ENCODE measurements at regions of chr19 and their contacts with region 1.

Region 1: DNA sequence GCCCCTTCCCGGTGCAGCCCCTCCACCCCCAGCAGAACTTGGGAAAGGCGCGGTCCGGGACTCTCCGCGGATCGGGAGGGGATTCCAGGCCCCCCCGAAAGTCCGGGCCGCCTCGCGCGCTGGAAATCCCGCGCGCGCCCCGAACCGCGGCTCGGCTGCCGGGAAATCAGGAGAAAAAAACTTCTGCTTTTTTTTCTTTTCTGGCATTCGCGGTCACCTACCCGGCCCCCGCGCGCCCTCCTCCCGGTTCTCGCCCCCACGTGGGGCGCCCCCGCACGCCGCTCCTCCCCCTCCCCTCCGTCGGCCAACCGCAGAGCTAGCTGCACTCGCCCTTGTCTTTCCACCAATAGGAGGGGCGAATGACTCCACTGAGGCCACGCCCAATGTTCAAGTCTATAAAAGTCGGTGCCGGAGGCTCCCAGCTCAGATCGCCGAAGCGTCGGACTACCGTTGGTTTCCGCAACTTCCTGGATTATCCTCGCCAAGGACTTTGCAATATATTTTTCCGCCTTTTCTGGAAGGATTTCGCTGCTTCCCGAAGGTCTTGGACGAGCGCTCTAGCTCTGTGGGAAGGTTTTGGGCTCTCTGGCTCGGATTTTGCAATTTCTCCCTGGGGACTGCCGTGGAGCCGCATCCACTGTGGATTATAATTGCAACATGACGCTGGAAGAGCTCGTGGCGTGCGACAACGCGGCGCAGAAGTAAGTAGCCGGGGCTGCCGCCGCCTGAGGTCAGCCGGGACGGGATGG is at the start of gene GADD45B:
- DNase-seq: peak; percentile 91 to 98 (median 97)
- ATAC-seq: peak; percentile 87
- H3K4me3 ChIP-seq: peak within 1 kb of the TSS; percentile 91
- H3K4me3 Mint-ChIP-seq: peak within 1 kb of the TSS; percentile 97 to 100 (median 99)
- H3K27ac ChIP-seq: peak within 1 kb of the TSS; percentile 90
- H3K27ac Mint-ChIP-seq: peak within 1 kb of the TSS; percentile 92 to 99 (median 96)
- H3K4me1 ChIP-seq: peaks cover 0 to 14% of the 10 kb centered on the region in 2 donors
- H3K4me1 Mint-ChIP-seq: peaks cover 7 to 20% (median 16%) of the 10 kb centered on the region in 7 donors
- H3K27me3 ChIP-seq: no peaks in the 10 kb centered on the region
- H3K27me3 Mint-ChIP-seq: peaks cover 0 to 10% (median 0%) of the 10 kb centered on the region in 5 donors
- total RNA-seq, gene GADD45B: 71.7 to 157 (median 84.2) TPM

Region 2: GRCh38 chr19:2164020-2164998 is 311.6 kb before region 1 on chr19:
- CTCF ChIA-PET with region 1: no interaction called
- POLR2A ChIA-PET with region 1: no interaction called
- intact Hi-C with region 1: loop called in 1 of 2 experiments (anchors 5 kb)
- DNase-seq: peak in 2 of 9 donors; percentile 33 to 57
- ATAC-seq: peak; percentile 30
- H3K4me3 ChIP-seq: peak overlapping the region; percentile 69
- H3K4me3 Mint-ChIP-seq: peak overlapping the region; percentile 86 to 96 (median 91)
- H3K27ac ChIP-seq: peak overlapping the region; percentile 95
- H3K27ac Mint-ChIP-seq: peak overlapping the region in 8 of 9 donors; percentile 46 to 91 (median 87)
- H3K4me1 ChIP-seq: peaks cover 0 to 22% of the 10 kb centered on the region in 2 donors
- H3K4me1 Mint-ChIP-seq: peaks cover 8 to 39% (median 29%) of the 10 kb centered on the region in 7 donors
- H3K27me3 ChIP-seq: no peaks in the 10 kb centered on the region
- H3K27me3 Mint-ChIP-seq: no peaks in the 10 kb centered on the region

Region 3: DNA sequence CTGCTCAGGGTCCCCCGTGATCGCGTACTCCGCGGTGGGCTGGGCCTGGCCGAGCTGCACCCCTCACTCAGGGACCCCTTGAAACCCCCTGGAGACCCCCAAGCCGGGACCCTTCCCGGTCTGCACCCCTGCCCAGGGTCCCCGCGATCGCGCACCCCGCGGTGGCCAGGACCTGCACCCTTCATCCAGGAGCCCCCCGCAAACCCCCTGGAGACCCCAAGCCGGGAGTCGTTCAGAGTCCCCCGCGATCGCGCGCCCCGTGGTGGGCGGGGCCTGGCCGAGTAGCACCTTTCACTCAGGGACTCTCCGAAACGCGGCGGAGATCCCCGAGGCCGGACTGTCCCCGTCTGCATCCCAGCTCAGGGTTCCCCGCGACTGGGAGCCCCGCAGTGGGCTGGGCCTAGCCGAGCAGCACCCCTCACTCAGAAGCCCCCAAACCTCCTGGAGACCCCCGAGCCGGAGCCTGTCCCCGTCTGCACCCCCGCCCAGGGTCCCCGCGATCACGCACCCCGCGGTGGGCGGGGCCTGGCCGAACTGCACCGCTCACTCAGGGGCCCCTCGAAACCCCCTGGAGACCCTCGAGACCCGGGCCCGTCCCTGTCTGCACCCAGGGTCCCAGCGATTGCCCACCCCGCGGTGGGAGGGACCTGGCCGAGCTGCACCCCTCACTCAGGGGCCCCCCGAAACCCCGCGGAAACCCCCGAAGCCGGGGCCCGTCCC is 19.9 kb before region 1 on chr19:
- CTCF ChIA-PET with region 1: interaction called, 5 read pairs
- POLR2A ChIA-PET with region 1: interaction called, 25 read pairs
- intact Hi-C with region 1: loop called (anchors 1 to 2 kb)
- DNase-seq: peak in 5 of 9 donors; percentile 14 to 68 (median 29)
- ATAC-seq: peak; percentile 59
- H3K4me3 ChIP-seq: peak overlapping the region; percentile 79
- H3K4me3 Mint-ChIP-seq: peak overlapping the region; percentile 77 to 90 (median 84)
- H3K27ac ChIP-seq: peak overlapping the region; percentile 86
- H3K27ac Mint-ChIP-seq: peak overlapping the region in 6 of 9 donors; percentile 77 to 88 (median 82)
- H3K4me1 ChIP-seq: peaks cover 14 to 18% of the 10 kb centered on the region in 2 donors
- H3K4me1 Mint-ChIP-seq: peaks cover 14 to 28% (median 18%) of the 10 kb centered on the region in 7 donors
- H3K27me3 ChIP-seq: no peaks in the 10 kb centered on the region
- H3K27me3 Mint-ChIP-seq: no peaks in the 10 kb centered on the region

Region 4: DNA sequence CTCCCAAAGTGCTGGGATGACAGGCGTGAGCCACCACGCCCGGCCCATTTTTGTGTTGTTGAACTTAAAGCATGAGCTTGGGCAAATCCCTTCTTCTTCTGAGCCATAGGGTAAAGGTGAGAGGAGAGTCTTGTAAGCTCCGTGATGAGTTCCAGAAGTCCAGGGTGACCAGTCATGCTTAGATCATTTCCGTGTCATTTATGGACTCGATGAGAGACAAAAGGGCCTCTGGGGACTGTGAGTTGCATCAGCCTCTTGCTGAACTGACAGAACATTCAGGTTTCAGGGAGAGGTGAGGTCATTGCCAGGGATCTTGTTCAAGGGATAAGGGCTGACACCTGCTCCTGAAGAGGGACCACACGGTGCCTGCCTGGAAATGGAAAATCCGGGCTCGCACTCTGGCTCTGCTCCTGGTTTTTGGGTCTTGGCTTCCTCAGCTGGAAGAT is 53.6 kb after region 1 on chr19:
- CTCF ChIA-PET with region 1: interaction called, 3 read pairs
- POLR2A ChIA-PET with region 1: interaction called, 35 read pairs
- intact Hi-C with region 1: no loop called
- DNase-seq: no peak
- ATAC-seq: no peak
- H3K4me3 ChIP-seq: no peak overlapping the region
- H3K4me3 Mint-ChIP-seq: no peak overlapping the region
- H3K27ac ChIP-seq: no peak overlapping the region
- H3K27ac Mint-ChIP-seq: no peak overlapping the region
- H3K4me1 ChIP-seq: peaks cover 3 to 7% of the 10 kb centered on the region in 2 donors
- H3K4me1 Mint-ChIP-seq: peaks cover 13 to 22% (median 14%) of the 10 kb centered on the region in 7 donors
- H3K27me3 ChIP-seq: no peaks in the 10 kb centered on the region
- H3K27me3 Mint-ChIP-seq: no peaks in the 10 kb centered on the region

Region 5: DNA sequence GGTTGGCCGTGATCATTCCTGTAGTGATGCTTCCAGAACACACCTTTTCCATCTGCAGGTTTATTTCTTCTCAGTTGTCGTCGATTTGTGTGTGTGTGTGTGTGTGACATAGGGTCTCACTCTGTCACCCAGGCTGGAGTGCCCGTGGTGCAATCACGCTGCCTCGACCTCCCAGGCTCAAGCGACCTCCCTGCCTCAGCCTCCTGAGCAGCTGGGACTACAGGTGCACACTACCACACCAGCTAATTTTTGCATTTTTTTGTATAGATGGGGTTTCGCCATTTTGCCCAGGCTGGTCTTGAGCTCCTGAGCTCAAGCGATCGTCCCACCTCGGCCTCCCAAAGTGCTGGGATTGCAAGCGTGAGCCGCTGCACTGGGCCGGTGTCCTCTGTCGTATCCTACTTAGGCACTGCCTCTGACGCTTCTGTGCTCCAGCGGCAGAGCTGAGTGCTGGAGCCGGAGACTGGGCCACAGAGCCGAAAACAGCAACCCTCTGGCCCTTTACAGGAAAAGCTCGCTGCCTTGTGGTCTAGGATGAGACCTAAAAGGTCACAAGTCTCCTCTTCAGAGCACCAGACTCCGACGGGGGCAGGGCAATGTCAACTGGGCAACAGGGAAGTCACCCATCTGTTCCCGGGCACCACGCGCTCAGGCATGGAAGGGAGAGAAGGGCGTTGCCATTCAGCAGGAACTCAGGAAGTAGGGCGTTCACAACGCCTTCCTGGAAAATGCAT is 91.5 kb after region 1 on chr19:
- CTCF ChIA-PET with region 1: interaction called, 4 read pairs
- POLR2A ChIA-PET with region 1: interaction called, 74 read pairs
- intact Hi-C with region 1: loop called in 1 of 2 experiments (anchors 1 kb)
- DNase-seq: no peak
- ATAC-seq: peak; percentile 31
- H3K4me3 ChIP-seq: no peak overlapping the region
- H3K4me3 Mint-ChIP-seq: peak overlapping the region in 3 of 10 donors; percentile 25 to 58 (median 34)
- H3K27ac ChIP-seq: no peak overlapping the region
- H3K27ac Mint-ChIP-seq: peak overlapping the region in 3 of 9 donors; percentile 0 to 60 (median 21)
- H3K4me1 ChIP-seq: peaks cover 0 to 2% of the 10 kb centered on the region in 2 donors
- H3K4me1 Mint-ChIP-seq: peaks cover 4 to 34% (median 17%) of the 10 kb centered on the region in 7 donors
- H3K27me3 ChIP-seq: no peaks in the 10 kb centered on the region
- H3K27me3 Mint-ChIP-seq: no peaks in the 10 kb centered on the region

Region 6: GRCh38 chr19:2627319-2627829 is 151.5 kb after region 1 on chr19:
- CTCF ChIA-PET with region 1: interaction called, 4 read pairs
- POLR2A ChIA-PET with region 1: interaction called, 415 read pairs
- intact Hi-C with region 1: no loop called
- DNase-seq: no peak
- ATAC-seq: peak; percentile 78
- H3K4me3 ChIP-seq: no peak overlapping the region
- H3K4me3 Mint-ChIP-seq: peak overlapping the region in 1 of 10 donors; percentile 42
- H3K27ac ChIP-seq: no peak overlapping the region
- H3K27ac Mint-ChIP-seq: peak overlapping the region in 6 of 9 donors; percentile 42 to 85 (median 80)
- H3K4me1 ChIP-seq: peaks cover 15 to 25% of the 10 kb centered on the region in 2 donors
- H3K4me1 Mint-ChIP-seq: peaks cover 13 to 68% (median 44%) of the 10 kb centered on the region in 7 donors
- H3K27me3 ChIP-seq: no peaks in the 10 kb centered on the region
- H3K27me3 Mint-ChIP-seq: no peaks in the 10 kb centered on the region

Region 7: GRCh38 chr19:3176603-3177501 is 701.0 kb after region 1 on chr19:
- CTCF ChIA-PET with region 1: no interaction called
- POLR2A ChIA-PET with region 1: no interaction called
- intact Hi-C with region 1: loop called in 1 of 2 experiments (anchors 5 kb)
- DNase-seq: peak in 2 of 9 donors; percentile 50 to 65
- ATAC-seq: peak; percentile 66
- H3K4me3 ChIP-seq: peak overlapping the region; percentile 58
- H3K4me3 Mint-ChIP-seq: peak overlapping the region; percentile 74 to 95 (median 84)
- H3K27ac ChIP-seq: peak overlapping the region; percentile 61
- H3K27ac Mint-ChIP-seq: peak overlapping the region; percentile 86 to 99 (median 93)
- H3K4me1 ChIP-seq: peaks cover 22 to 23% of the 10 kb centered on the region in 2 donors
- H3K4me1 Mint-ChIP-seq: peaks cover 5 to 26% (median 21%) of the 10 kb centered on the region in 7 donors
- H3K27me3 ChIP-seq: no peaks in the 10 kb centered on the region
- H3K27me3 Mint-ChIP-seq: no peaks in the 10 kb centered on the region

Measured in naive thymus-derived CD4-positive, alpha-beta T cell (primary cell).